Mammary epithelial cell (primary cell): ENCODE measurements at regions of chr12 and their contacts with region 1.

Region 1: DNA sequence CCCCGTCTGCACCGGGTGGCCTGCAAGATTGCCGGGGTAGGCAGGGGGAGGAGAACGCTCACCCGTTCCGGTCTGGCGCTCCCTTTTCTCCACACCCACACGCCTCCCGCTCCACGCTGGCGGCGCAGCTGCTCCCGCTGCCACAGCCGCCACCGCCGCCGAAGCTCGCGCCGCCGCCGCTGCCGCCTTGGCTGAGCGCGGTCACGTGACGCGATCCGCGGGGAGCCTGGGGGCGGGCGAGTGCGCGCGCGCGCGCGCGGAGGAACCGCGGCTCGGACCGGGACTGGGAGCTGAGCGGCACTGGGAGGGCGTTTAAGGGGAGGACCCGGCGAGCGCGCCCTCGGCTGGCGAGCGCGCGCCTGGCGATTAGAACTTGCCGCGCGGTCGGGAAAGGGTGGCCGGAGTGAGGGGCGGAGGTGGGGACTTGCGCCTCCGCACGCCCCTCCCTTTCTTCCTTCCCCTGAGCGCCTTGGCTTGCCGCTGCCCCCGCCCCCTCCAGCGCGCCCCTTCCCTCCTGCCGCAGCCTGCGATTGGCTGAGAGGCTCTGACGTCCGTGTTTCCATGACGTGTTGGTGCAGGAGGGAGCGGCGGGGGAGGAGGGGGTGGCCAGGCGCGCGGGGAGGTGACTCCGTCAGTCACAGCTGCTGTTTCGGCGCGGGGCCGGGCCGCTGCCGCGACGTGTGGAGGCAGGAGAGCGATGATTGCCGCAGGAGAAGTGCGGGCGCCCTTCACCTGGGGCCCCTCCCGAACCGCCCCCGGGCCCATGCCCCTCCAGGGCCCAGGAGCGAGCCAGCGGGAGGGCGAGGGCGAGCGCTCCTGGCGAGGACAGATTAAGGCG is 738 bp upstream of the ATP2B1 start:
- DNase-seq: peak; percentile 99
- H3K4me3 ChIP-seq: peak overlapping the region; percentile 80 to 97 (median 90)
- H3K27ac ChIP-seq: peak overlapping the region; percentile 95
- H3K4me1 ChIP-seq: peaks cover 5% of the 10 kb centered on the region
- H3K27me3 ChIP-seq: no peaks in the 10 kb centered on the region
- CTCF ChIP-seq: no peak

Region 2: DNA sequence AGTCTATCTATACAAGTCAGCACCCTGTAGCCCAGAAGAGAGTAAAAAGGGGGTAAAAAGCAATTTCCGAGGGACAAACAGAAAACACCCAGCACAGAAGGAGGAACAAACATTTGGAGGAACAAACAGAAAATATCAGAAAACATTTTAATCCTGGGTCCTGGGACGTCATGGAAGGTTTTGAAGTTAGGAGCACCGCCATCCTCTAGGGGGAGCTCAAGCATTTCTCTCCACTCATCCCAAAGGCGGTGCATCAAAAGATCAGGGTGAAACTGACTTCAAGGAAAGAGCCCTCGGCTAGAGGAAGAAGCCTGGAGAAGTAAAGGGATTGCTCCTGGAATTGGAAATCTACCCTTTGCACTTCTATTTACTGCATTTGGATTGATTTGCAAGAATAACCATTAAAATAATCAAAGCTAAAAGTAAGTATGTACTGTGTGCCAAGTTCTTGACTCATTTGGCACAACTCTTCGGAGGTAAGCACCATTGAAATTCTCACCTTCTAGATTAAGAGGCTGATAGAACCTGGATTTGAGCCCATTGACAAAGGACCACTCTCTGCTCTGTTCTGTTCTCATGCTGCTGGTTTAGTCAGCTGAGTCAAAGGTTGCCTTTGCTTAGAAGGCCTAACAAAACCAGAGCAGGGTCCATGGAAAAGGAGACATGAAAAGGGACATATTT is 166.3 kb before region 1 on chr12:
- CTCF ChIA-PET with region 1: no interaction called
- dilution Hi-C with region 1: no loop called
- in situ Hi-C with region 1: no loop called
- intact Hi-C with region 1: loop called (anchors 1 kb)
- DNase-seq: peak; percentile 68
- H3K4me3 ChIP-seq: no peak overlapping the region
- H3K27ac ChIP-seq: no peak overlapping the region
- H3K4me1 ChIP-seq: peaks cover 9% of the 10 kb centered on the region
- H3K27me3 ChIP-seq: no peaks in the 10 kb centered on the region
- CTCF ChIP-seq: peak; percentile 86 to 91

Region 3: GRCh38 chr12:89733579-89734201 is 24.3 kb after region 1 on chr12:
- CTCF ChIA-PET with region 1: no interaction called
- dilution Hi-C with region 1: no loop called
- in situ Hi-C with region 1: no loop called
- intact Hi-C with region 1: loop called (anchors 1 kb)
- DNase-seq: peak; percentile 96
- H3K4me3 ChIP-seq: no peak overlapping the region
- H3K27ac ChIP-seq: peak overlapping the region; percentile 81
- H3K4me1 ChIP-seq: peaks cover 25% of the 10 kb centered on the region
- H3K27me3 ChIP-seq: no peaks in the 10 kb centered on the region
- CTCF ChIP-seq: no peak

Region 4: DNA sequence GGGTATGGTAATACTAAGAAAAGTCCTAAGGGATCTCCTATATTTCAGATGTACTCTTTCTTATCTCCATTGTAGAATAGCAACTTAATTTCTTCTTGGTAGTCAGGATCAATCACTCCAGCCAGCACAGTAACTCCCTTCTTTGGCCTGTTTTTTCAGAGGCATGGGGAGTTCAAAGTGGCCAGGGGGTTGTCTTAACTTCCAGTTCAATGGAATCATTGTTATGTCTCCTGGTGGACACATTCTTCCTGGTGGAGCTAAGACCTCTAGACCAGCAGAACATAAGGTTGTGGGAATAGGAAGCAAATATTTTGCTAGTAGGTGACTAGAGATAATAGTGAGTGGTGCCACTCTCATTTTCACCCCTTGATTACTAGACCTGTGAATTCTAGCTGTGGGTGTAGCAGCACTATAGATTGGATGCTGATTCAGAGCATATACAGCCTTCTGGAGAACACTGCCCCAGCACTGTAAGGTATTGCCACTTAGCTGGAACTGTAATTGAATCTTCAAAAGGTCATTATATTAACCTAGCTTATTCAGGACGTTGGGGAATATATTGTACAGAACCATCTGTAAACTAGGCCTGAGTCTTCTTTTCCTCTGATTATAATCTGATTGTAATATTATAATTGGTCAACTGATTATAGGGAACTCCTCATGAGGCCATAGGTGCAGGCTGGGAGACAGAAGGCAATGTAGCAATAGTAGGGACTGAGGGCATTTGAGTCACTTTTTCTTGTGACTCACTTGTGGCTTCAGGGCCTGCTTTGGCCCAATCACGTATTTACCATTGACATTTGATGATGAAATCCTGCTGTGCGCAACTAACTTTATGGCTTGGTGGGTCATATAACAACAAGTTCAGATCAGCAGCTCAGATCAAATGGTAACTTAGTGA is 59.5 kb after region 1 on chr12:
- CTCF ChIA-PET with region 1: no interaction called
- dilution Hi-C with region 1: no loop called
- in situ Hi-C with region 1: no loop called
- intact Hi-C with region 1: loop called (anchors 2 kb)
- DNase-seq: peak; percentile 99
- H3K4me3 ChIP-seq: no peak overlapping the region
- H3K27ac ChIP-seq: peak overlapping the region; percentile 84
- H3K4me1 ChIP-seq: peaks cover 26% of the 10 kb centered on the region
- H3K27me3 ChIP-seq: no peaks in the 10 kb centered on the region
- CTCF ChIP-seq: no peak

Region 5: GRCh38 chr12:89949457-89950195 is 240.2 kb after region 1 on chr12:
- CTCF ChIA-PET with region 1: no interaction called
- dilution Hi-C with region 1: no loop called
- in situ Hi-C with region 1: no loop called
- intact Hi-C with region 1: loop called (anchors 2 kb)
- DNase-seq: peak; percentile 91
- H3K4me3 ChIP-seq: no peak overlapping the region
- H3K27ac ChIP-seq: peak overlapping the region; percentile 91
- H3K4me1 ChIP-seq: peaks cover 46% of the 10 kb centered on the region
- H3K27me3 ChIP-seq: no peaks in the 10 kb centered on the region
- CTCF ChIP-seq: peak; percentile 15 to 41

Region 6: DNA sequence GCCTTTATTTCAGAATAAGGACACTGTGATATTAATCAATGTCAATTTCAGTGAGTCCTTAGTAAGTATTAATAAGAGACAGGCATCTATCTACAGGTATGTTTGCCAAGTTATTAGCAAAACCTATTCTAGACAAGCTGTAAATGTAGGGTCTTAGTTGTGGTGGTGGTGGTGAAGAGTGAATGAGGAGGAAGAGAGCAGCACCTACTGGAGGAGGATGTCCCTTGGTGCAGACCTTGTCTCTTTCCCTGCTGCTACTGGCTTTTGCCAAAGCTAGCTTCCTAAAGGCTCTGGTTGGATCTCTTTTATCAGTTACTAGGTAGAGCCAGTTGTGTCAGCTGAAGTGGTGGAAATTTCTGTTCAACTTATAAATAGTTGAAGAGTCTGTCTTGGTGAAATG is 304.0 kb after region 1 on chr12:
- CTCF ChIA-PET with region 1: no interaction called
- dilution Hi-C with region 1: no loop called
- in situ Hi-C with region 1: no loop called
- intact Hi-C with region 1: loop called (anchors 5 kb)
- DNase-seq: no peak
- H3K4me3 ChIP-seq: no peak overlapping the region
- H3K27ac ChIP-seq: no peak overlapping the region
- H3K4me1 ChIP-seq: peaks cover 10% of the 10 kb centered on the region
- H3K27me3 ChIP-seq: no peaks in the 10 kb centered on the region
- CTCF ChIP-seq: peak in 1 of 2 donors; percentile 29

Region 7: GRCh38 chr12:90253674-90254181 is 544.4 kb after region 1 on chr12:
- CTCF ChIA-PET with region 1: no interaction called
- dilution Hi-C with region 1: no loop called
- in situ Hi-C with region 1: no loop called
- intact Hi-C with region 1: loop called (anchors 2 kb)
- DNase-seq: peak; percentile 97
- H3K4me3 ChIP-seq: no peak overlapping the region
- H3K27ac ChIP-seq: peak overlapping the region; percentile 45
- H3K4me1 ChIP-seq: peaks cover 24% of the 10 kb centered on the region
- H3K27me3 ChIP-seq: no peaks in the 10 kb centered on the region
- CTCF ChIP-seq: peak; percentile 46 to 55